Activated CD8-positive, alpha-beta T cell treated with anti-CD3 and anti-CD28 coated beads, Interleukin-2, amount 10 ng/mL, durations not matched to agents 7 days and 5 days (primary cell): ENCODE measurements at regions of chr21 and their contacts with region 1.

Region 1: DNA sequence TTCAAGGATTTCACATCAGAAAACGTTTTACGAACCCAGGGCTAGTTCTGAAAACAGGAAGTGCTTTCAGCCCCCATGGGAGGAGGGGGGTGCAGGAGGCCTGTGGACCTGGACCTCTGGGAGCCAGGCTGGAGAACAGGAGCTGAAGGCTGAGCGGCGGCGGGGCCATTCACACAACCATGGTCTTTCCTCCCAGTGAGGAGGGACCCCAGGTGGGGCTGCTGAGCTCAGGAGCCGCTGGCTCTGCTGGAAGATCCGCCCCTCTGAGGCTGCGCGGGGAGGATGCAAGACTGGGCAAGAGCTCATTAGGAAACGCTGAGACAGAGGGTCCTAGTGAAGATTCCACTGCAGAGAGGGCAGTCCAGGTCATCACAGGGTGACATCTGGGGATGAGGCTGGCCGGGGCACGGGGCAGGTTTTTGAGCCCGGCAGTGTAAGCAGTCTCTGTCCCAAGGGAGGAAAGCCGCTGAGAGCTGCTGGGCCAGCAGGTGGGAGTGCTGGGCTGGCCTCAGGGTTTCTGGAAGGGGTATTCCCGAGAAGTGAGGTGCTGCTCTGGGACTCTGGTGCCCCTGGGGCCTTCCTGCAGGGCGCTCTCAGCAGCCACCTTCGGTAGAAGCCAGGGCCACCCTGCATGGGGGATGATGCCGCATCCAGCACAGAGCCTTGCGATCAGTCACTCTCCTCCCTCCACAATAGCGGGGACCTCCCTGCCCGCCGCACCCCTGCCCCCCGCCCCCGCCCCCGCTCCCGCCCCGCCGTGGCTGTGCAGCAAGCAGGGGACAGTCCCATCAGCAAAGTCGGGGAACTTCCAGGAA is 7.5 kb downstream of the MX2 start:
- DNase-seq: peak; percentile 52
- ATAC-seq: peak; percentile 61
- H3K4me3 Mint-ChIP-seq: peak overlapping the region; percentile 77
- H3K27ac Mint-ChIP-seq: peak overlapping the region; percentile 95
- H3K4me1 Mint-ChIP-seq: peaks cover 77% of the 10 kb centered on the region
- H3K27me3 Mint-ChIP-seq: no peaks in the 10 kb centered on the region

Region 2: DNA sequence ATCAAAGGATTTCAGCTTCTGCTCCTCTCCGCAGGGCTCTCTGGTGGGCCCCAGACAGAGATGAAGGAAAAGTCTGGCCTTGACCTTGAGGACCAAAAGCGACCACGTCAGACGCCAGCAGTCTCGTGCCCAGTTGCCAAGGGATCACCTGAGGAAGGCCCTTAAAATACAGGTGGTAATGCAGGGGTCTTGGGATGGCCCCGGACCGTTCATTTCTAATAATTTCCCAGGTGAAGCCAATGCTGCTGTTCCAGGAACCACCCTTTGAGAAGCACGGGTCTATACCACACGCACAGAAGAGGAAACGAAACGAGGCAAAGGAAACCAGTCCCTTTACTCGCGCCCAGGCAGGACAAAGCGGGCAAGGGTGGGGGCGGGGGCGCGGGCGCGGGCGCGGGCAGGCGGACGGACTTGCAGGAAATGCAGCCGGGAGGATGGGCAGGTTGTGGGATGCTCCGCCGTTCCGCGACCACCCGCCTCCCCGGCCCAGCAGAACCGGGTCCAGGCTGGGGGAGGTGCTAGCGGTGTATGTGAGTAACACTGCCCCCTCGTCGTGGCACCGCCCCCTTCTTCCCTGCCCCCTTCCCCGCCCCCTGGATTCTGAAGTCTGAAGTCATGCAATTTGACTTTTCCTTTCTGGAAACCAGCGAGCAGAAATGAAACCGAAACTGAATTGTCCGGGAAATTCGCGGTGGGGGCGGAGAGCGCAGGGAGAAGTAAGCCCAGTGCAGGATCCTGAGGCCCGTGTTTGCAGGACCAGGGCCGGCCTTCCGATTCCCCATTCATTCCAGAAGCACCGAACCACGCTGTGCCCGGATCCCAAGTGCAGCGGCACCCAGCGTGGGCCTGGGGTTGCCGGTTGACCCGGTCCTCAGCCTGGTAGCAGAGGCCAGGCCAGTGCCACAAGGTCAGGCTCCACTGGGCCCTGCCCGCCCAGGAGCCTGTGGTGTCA is 50.9 kb after region 1 on chr21:
- CTCF ChIA-PET with region 1: interaction called, 4 read pairs
- POLR2A ChIA-PET with region 1: interaction called, 178 read pairs
- DNase-seq: peak; percentile 77
- ATAC-seq: peak; percentile 83
- H3K4me3 Mint-ChIP-seq: peak overlapping the region; percentile 86
- H3K27ac Mint-ChIP-seq: peak overlapping the region; percentile 100
- H3K4me1 Mint-ChIP-seq: peaks cover 71% of the 10 kb centered on the region
- H3K27me3 Mint-ChIP-seq: peaks cover 4% of the 10 kb centered on the region